Activated CD4-positive, alpha-beta memory T cell treated with anti-CD3 and anti-CD28 coated beads for 36 hours (primary cell): ENCODE measurements at regions of chr2 and their contacts with region 1.

Region 1: GRCh38 chr2:224927646-224928173 is 114.6 kb downstream of the DOCK10 start:
- DNase-seq: peak; percentile 83
- H3K4me3 Mint-ChIP-seq: peak overlapping the region; percentile 66
- H3K27ac Mint-ChIP-seq: peak overlapping the region; percentile 96
- H3K4me1 Mint-ChIP-seq: peaks cover 97% of the 10 kb centered on the region
- H3K27me3 Mint-ChIP-seq: no peaks in the 10 kb centered on the region

Region 2: DNA sequence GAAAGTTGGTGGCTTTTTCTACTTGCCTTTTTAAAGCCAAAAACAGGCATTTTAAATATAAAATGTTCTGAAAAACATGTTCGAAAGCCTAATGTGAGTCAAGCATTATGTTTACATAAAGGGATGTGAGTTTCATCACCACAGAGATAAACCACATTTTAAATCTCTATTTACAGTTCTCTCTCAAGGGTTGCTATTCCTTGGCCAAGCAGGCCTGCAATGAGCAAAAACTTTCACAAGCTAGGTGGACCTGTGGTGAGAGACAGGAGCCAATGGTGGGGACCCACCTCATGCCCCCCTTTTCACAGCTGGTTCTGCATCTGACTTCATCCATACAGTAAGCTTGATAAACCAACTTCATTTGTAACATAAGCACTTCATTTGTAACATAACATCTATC is 407.6 kb before region 1 on chr2:
- CTCF ChIA-PET with region 1: no interaction called
- POLR2A ChIA-PET with region 1: no interaction called
- intact Hi-C with region 1: loop called (anchors 2 kb)
- DNase-seq: peak; percentile 71
- H3K4me3 Mint-ChIP-seq: no peak overlapping the region
- H3K27ac Mint-ChIP-seq: peak overlapping the region; percentile 9
- H3K4me1 Mint-ChIP-seq: peaks cover 53% of the 10 kb centered on the region
- H3K27me3 Mint-ChIP-seq: no peaks in the 10 kb centered on the region

Region 3: GRCh38 chr2:224638301-224638823 is 289.3 kb before region 1 on chr2:
- CTCF ChIA-PET with region 1: no interaction called
- POLR2A ChIA-PET with region 1: no interaction called
- intact Hi-C with region 1: loop called (anchors 2 kb)
- DNase-seq: peak; percentile 66
- H3K4me3 Mint-ChIP-seq: peak overlapping the region; percentile 30
- H3K27ac Mint-ChIP-seq: peak overlapping the region; percentile 89
- H3K4me1 Mint-ChIP-seq: peaks cover 10% of the 10 kb centered on the region
- H3K27me3 Mint-ChIP-seq: peaks cover 2% of the 10 kb centered on the region

Region 4: GRCh38 chr2:224938651-224939182 is 11.0 kb after region 1 on chr2:
- CTCF ChIA-PET with region 1: interaction called, 29 read pairs
- POLR2A ChIA-PET with region 1: interaction called, 209 read pairs
- intact Hi-C with region 1: loop called (anchors 1 kb)
- DNase-seq: peak; percentile 56
- H3K4me3 Mint-ChIP-seq: peak overlapping the region; percentile 67
- H3K27ac Mint-ChIP-seq: peak overlapping the region; percentile 79
- H3K4me1 Mint-ChIP-seq: peaks cover 80% of the 10 kb centered on the region
- H3K27me3 Mint-ChIP-seq: no peaks in the 10 kb centered on the region

Region 5: DNA sequence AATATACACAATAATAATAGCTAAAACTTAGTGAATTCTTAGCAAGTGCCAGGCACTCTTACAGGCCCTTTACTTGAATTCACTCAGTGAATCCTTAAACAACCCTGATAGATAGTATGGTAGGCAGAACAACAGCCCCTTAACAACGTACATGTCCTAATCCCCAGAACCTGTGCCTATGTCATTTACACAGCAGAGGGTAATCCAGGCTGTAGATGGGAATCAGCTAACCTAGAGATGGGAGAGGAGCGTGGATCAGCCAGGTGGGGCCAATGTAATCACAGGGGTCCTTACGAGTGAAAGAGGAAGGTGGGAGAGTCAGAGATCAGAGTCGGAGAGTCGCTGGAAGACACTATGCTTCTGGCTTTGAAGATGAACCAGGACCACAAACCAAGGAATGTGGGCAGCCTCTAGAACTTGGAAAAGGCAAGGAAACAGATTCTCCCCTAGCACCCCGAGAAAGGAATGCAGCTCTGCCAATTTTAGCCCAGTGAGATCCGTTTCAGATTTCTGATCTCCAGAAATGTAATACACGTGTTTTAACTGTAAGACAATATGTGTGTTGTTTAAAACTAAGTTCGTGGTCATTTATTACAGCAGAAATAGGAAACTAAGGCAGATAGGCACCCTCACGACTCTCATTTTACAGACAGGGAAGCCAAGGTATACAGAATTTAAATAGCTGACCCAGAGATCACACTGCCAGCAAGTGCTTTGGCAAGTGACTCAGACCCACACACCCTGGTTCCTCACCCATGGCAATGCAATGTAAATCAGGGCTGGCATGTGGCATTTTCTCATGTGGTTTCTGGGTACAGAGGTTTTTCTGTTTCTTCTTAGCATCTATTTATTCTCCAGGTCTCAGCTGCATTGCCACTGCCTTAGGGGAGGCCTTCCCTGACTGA is 45.7 kb after region 1 on chr2:
- CTCF ChIA-PET with region 1: no interaction called
- POLR2A ChIA-PET with region 1: no interaction called
- intact Hi-C with region 1: loop called (anchors 1 kb)
- DNase-seq: peak; percentile 43
- H3K4me3 Mint-ChIP-seq: no peak overlapping the region
- H3K27ac Mint-ChIP-seq: peak overlapping the region; percentile 35
- H3K4me1 Mint-ChIP-seq: peaks cover 76% of the 10 kb centered on the region
- H3K27me3 Mint-ChIP-seq: no peaks in the 10 kb centered on the region

Region 6: DNA sequence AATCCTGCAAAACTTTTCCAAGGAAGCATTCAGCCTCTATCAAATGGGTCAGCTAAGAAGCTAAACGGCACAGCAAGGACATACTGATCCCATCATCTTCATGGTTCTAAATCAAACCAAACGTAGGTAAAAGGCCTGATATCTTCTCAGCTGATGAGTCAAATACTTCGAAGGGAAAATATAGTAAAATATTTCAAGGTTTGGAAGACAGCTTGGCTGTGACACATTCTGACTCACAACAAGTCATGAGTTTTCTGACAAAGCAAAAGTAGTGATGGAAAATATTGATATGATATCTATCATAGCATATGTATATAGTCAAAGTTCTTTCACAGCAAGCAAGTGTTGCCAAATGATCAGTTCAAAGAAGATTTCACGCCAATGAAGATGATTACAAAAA is 83.1 kb after region 1 on chr2:
- CTCF ChIA-PET with region 1: interaction called, 4 read pairs
- POLR2A ChIA-PET with region 1: interaction called, 6 read pairs
- intact Hi-C with region 1: loop called (anchors 1 kb)
- DNase-seq: no peak
- H3K4me3 Mint-ChIP-seq: no peak overlapping the region
- H3K27ac Mint-ChIP-seq: peak overlapping the region; percentile 78
- H3K4me1 Mint-ChIP-seq: peaks cover 93% of the 10 kb centered on the region
- H3K27me3 Mint-ChIP-seq: no peaks in the 10 kb centered on the region

Region 7: DNA sequence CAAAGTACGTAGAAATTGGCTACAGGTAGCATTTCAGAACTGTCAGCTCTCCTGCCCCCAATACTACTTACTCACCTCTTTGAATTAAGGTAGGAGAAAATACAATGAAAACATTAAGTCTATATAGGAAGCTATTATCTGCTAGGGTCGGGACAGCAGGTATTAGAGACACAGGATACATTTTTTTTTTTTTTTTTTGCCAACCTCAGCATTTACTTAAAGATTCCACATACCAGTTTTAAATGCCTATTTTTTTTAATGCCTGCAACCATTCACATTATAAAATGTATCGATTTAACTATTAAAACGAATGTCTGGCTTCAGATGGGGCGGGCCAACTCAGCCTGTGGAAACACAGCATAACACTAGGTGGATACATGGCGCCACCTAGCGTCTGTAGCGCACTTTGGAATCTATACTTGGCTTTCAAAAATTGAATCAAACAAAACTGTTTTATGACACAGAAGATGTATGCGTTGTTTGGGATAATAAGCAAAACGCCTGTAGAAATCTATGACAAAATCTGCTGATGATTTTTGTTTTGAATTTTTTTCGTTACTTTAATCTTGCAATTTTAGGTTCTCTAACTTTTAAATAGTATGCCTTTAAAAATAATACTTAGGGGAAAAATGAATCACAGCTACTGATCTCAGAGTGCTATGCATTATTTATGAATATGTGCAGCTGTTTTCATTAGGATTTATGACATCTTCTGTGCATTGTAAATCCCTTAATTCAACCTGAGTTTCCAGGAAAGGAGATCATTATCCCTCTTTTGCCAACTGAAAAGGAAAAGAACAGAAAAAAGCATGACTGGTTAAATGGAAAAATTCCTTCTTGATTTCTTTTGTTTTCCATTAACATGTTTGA is 732.8 kb after region 1 on chr2:
- CTCF ChIA-PET with region 1: interaction called, 3 read pairs
- POLR2A ChIA-PET with region 1: no interaction called
- intact Hi-C with region 1: loop called (anchors 5 kb)
- DNase-seq: peak; percentile 83
- H3K4me3 Mint-ChIP-seq: no peak overlapping the region
- H3K27ac Mint-ChIP-seq: no peak overlapping the region
- H3K4me1 Mint-ChIP-seq: no peaks in the 10 kb centered on the region
- H3K27me3 Mint-ChIP-seq: peaks cover 14% of the 10 kb centered on the region